H1 (cell line): ENCODE measurements at regions of chr22 and their contacts with region 1.

Region 1: DNA sequence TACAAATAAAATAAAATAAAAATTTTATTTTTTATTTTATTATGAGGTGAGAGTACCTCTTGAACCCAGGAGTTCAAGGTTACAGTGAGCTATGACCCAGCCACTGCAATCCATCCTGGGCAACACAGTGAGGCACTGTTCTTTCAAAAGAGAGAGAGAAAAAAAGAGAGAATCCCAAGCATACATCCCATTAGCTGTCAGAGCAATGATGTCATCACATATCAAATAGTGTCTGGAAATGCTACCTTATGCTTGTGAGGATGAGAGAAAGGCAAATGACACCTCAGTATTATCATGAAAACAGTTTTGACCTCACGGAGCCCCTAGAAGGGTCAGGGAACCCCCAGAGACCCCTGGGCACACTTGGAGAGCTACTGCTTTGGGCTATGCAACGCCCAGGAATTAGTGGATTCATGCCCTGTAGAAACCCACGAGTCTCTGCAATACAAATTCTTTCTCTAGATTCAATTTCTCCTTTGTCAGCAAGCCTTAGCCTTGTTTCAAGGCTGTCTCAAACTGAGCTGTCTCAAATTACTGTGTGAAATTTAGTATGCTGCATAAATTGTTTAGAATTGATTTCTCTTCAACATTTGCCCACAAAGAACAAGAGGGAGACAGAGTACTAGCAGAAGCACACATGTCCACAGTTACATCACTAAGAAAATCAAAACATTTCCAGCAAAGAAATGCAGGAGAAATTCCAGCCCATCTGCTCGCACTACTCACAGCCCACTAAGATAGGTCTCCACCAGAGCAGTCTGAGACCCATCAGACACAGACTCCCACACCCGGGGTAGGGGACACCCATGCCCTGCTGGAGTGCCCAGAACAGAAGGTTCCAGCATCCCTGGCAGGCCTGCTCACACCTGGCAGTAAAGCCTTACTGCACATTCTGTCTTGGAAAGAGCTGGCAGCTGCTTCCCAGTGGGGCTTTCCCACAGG is 18.1 kb downstream of the DGCR2 start:
- DNase-seq: no peak
- H3K4me3 ChIP-seq: no peak overlapping the region
- H3K27ac ChIP-seq: no peak overlapping the region
- H3K4me1 ChIP-seq: no peaks in the 10 kb centered on the region
- H3K27me3 ChIP-seq: no peaks in the 10 kb centered on the region; a peak in 1 of 7 replicates
- CTCF ChIP-seq: no peak
- EP300 ChIP-seq: no peak
- POLR2A ChIP-seq: no peak
- RAD21 ChIP-seq: no peak

Region 2: DNA sequence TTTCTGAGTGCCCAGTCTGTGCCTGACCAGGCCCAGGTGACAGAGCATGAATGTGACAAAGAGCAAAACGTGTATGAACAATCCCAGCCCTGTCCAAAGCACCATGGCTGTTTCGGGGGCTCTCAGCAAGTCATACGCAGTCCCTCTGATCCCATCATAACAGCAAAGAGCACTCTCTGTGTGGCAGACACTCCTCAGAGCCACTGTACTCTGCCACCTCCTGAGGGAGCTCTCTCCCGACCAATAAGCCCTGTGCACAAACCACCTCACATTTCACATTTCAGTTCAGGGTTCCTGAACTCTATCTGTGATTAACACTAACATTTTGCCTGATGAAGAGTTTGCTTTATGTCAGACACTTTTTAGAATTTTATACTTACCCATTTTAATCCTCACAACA is 11.5 kb after region 1 on chr22:
- CTCF ChIA-PET with region 1: interaction called, 11 read pairs
- POLR2A ChIA-PET with region 1: interaction called, 8 read pairs
- DNase-seq: no peak
- H3K4me3 ChIP-seq: no peak overlapping the region
- H3K27ac ChIP-seq: no peak overlapping the region
- H3K4me1 ChIP-seq: peaks cover 5 to 7% (median 6%) of the 10 kb centered on the region in 4 experiments; a peak in 5 of 7 replicates
- H3K27me3 ChIP-seq: no peaks in the 10 kb centered on the region
- CTCF ChIP-seq: peak in 2 of 3 experiments; percentile 9 to 12; a peak in 2 of 4 replicates
- EP300 ChIP-seq: no peak
- POLR2A ChIP-seq: no peak
- RAD21 ChIP-seq: no peak; a peak in 1 of 4 replicates

Region 3: GRCh38 chr22:19270873-19271272 is 166.7 kb after region 1 on chr22:
- CTCF ChIA-PET with region 1: no interaction called
- POLR2A ChIA-PET with region 1: no interaction called
- DNase-seq: no peak
- H3K4me3 ChIP-seq: no peak overlapping the region
- H3K27ac ChIP-seq: no peak overlapping the region
- H3K4me1 ChIP-seq: no peaks in the 10 kb centered on the region
- H3K27me3 ChIP-seq: no peaks in the 10 kb centered on the region
- CTCF ChIP-seq: no peak
- EP300 ChIP-seq: no peak
- POLR2A ChIP-seq: no peak
- RAD21 ChIP-seq: peak; percentile 1 to 37; a peak in 2 of 4 replicates